ENCODE measurements at regions of chr7 and their contacts with region 1.

Region 1: DNA sequence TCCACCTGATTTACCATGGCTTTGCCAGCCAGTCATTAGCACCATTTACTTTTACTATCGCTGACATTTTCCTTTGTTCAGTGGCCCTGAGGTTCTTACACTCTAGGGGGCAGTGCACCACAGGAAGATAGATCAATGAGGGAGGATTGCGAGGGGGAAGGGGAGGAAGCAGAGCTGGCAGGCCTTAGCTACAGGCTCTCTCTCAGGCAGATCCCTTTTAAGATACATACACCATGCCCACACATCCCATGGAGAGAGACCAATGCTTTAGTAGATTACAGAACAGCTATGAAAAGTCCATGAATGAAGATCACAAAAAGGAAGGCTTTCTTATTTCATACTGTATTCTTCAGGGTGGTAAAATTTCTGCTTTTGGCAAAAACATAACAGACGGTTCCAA is 47.4 kb downstream of the DENND11 start:
- DNase-seq: peak; percentile 14 to 80 (median 62)
- ATAC-seq: peak; percentile 86 to 96 (median 93)
- H3K4me3 ChIP-seq: no peak overlapping the region
- H3K4me3 Mint-ChIP-seq: no peak overlapping the region
- H3K27ac ChIP-seq: no peak overlapping the region
- H3K27ac Mint-ChIP-seq: peak overlapping the region; percentile 30 to 82
- H3K4me1 ChIP-seq: no peaks in the 10 kb centered on the region
- H3K4me1 Mint-ChIP-seq: peaks cover 6 to 10% (median 6%) of the 10 kb centered on the region in 3 donors
- H3K27me3 ChIP-seq: no peaks in the 10 kb centered on the region
- H3K27me3 Mint-ChIP-seq: no peaks in the 10 kb centered on the region

Region 2: GRCh38 chr7:141128506-141128905 is 526.0 kb before region 1 on chr7:
- CTCF ChIA-PET with region 1: no interaction called
- POLR2A ChIA-PET with region 1: no interaction called
- DNase-seq: no peak
- ATAC-seq: no peak
- H3K4me3 ChIP-seq: no peak overlapping the region
- H3K4me3 Mint-ChIP-seq: no peak overlapping the region
- H3K27ac ChIP-seq: no peak overlapping the region
- H3K27ac Mint-ChIP-seq: no peak overlapping the region
- H3K4me1 ChIP-seq: no peaks in the 10 kb centered on the region
- H3K4me1 Mint-ChIP-seq: no peaks in the 10 kb centered on the region
- H3K27me3 ChIP-seq: peaks cover 0 to 9% of the 10 kb centered on the region in 2 experiments
- H3K27me3 Mint-ChIP-seq: peaks cover 18 to 24% of the 10 kb centered on the region in 2 donors

Region 3: DNA sequence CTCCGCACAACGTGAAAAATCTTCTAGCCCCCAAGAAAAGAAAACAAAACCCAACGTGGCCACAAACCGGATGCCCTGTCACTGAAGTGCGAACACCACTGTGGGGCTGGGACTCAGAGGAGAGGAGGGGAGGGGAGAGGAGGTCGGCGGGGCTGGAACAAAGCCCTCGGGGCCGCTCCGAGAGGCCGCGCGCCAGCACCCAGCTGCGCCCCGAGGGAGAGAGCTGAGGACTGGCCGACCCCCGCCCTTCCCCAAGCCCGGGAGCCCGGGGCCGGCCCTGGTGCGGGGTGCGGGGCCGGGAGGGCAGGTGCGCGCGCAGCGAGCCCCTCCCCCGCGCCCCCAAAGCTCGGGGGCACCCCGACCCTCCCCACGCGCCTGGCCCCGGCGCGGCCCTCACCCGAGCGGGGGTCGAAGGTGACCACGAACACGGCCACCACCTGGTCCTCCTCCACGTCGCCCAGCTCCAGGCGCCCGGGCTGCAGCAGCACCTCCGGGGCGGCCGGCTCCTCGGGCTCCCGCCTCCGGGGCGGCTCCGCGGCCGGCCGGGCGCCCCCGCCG is 47.0 kb after region 1 on chr7:
- CTCF ChIA-PET with region 1: interaction called in 1 of 2 experiments, 11 read pairs
- POLR2A ChIA-PET with region 1: interaction called in 1 of 2 experiments, 3 read pairs
- DNase-seq: peak; percentile 45 to 86 (median 77)
- ATAC-seq: peak; percentile 87 to 90 (median 88)
- H3K4me3 ChIP-seq: peak overlapping the region; percentile 51 to 58
- H3K4me3 Mint-ChIP-seq: peak overlapping the region; percentile 84 to 94 (median 88)
- H3K27ac ChIP-seq: peak overlapping the region; percentile 28
- H3K27ac Mint-ChIP-seq: peak overlapping the region; percentile 56 to 86
- H3K4me1 ChIP-seq: peaks cover 4 to 20% of the 10 kb centered on the region in 2 experiments
- H3K4me1 Mint-ChIP-seq: peaks cover 47 to 56% (median 50%) of the 10 kb centered on the region in 3 donors
- H3K27me3 ChIP-seq: no peaks in the 10 kb centered on the region
- H3K27me3 Mint-ChIP-seq: no peaks in the 10 kb centered on the region

Region 4: DNA sequence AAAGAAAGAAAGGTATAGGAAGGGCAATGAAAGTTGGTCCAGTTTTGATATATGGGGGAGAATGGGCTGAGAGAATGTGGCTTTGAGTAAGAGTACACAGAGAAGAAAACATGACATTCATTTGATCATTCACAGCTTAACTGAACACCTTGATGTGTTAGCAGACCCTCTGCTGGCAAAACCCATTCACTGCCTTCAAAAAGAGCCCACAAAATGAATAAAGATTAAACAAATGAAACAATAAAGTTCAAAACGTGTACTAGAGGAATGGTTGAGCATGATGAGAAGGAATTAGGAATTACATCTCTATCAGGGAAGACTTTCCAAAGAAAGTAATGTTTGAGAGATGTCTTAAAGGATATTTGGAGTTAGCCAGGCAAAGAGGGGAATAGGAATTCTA is 55.8 kb after region 1 on chr7:
- CTCF ChIA-PET with region 1: interaction called, 7 to 11 read pairs
- POLR2A ChIA-PET with region 1: interaction called in 1 of 2 experiments, 3 read pairs
- DNase-seq: peak in 1 of 35 experiments; percentile 21
- ATAC-seq: no peak
- H3K4me3 ChIP-seq: no peak overlapping the region
- H3K4me3 Mint-ChIP-seq: no peak overlapping the region
- H3K27ac ChIP-seq: no peak overlapping the region
- H3K27ac Mint-ChIP-seq: no peak overlapping the region
- H3K4me1 ChIP-seq: no peaks in the 10 kb centered on the region
- H3K4me1 Mint-ChIP-seq: peaks cover 0 to 2% (median 0%) of the 10 kb centered on the region in 3 donors
- H3K27me3 ChIP-seq: no peaks in the 10 kb centered on the region
- H3K27me3 Mint-ChIP-seq: no peaks in the 10 kb centered on the region

Region 5: GRCh38 chr7:141737834-141738591 is 83.5 kb after region 1 on chr7 and contains the start of gene SSBP1:
- CTCF ChIA-PET with region 1: interaction called, 12 to 39 read pairs
- POLR2A ChIA-PET with region 1: interaction called in 1 of 2 experiments, 8 read pairs
- DNase-seq: peak; percentile 82 to 97 (median 89)
- ATAC-seq: peak; percentile 85 to 93 (median 90)
- H3K4me3 ChIP-seq: peak within 1 kb of the TSS; percentile 65 to 96
- H3K4me3 Mint-ChIP-seq: peak within 1 kb of the TSS; percentile 96 to 98 (median 97)
- H3K27ac ChIP-seq: peak within 1 kb of the TSS; percentile 87
- H3K27ac Mint-ChIP-seq: peak within 1 kb of the TSS; percentile 95 to 97
- H3K4me1 ChIP-seq: peaks cover 14 to 18% of the 10 kb centered on the region in 2 experiments
- H3K4me1 Mint-ChIP-seq: peaks cover 52 to 54% (median 53%) of the 10 kb centered on the region in 3 donors
- H3K27me3 ChIP-seq: no peaks in the 10 kb centered on the region
- H3K27me3 Mint-ChIP-seq: no peaks in the 10 kb centered on the region
- total RNA-seq, gene SSBP1: 88.1 to 116 (median 91.1) TPM

Region 6: GRCh38 chr7:141785706-141786552 is 131.4 kb after region 1 on chr7:
- CTCF ChIA-PET with region 1: interaction called, 29 to 32 read pairs
- POLR2A ChIA-PET with region 1: interaction called in 1 of 2 experiments, 3 read pairs
- DNase-seq: peak in 20 of 35 experiments; percentile 0 to 62 (median 4)
- ATAC-seq: peak in 1 of 4 experiments; percentile 60
- H3K4me3 ChIP-seq: no peak overlapping the region
- H3K4me3 Mint-ChIP-seq: no peak overlapping the region
- H3K27ac ChIP-seq: no peak overlapping the region
- H3K27ac Mint-ChIP-seq: no peak overlapping the region
- H3K4me1 ChIP-seq: no peaks in the 10 kb centered on the region
- H3K4me1 Mint-ChIP-seq: no peaks in the 10 kb centered on the region
- H3K27me3 ChIP-seq: no peaks in the 10 kb centered on the region
- H3K27me3 Mint-ChIP-seq: no peaks in the 10 kb centered on the region

Region 7: DNA sequence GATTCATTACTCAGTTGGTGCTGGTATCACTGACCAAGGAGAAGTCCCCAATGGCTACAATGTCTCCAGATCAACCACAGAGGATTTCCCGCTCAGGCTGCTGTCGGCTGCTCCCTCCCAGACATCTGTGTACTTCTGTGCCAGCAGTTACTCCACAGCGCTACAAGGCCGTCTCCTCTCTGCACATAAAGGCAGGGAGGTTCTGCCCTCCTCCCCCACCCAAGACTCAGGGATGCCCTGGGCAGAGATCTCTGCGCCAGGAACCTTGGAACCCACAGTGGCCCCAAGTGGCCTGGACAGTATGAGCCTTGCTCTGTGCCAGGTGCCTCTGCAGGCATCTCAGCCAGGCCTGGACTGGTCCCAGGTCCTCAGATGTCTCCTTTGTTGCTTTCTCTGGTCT is 796.7 kb after region 1 on chr7:
- CTCF ChIA-PET with region 1: no interaction called
- POLR2A ChIA-PET with region 1: no interaction called
- DNase-seq: no peak
- ATAC-seq: no peak
- H3K4me3 ChIP-seq: peak overlapping the region in 1 of 2 donors; percentile 7
- H3K4me3 Mint-ChIP-seq: peak overlapping the region; percentile 13 to 39 (median 36)
- H3K27ac ChIP-seq: no peak overlapping the region
- H3K27ac Mint-ChIP-seq: no peak overlapping the region
- H3K4me1 ChIP-seq: peaks cover 11 to 16% of the 10 kb centered on the region in 2 experiments
- H3K4me1 Mint-ChIP-seq: peaks cover 19 to 34% (median 30%) of the 10 kb centered on the region in 3 donors
- H3K27me3 ChIP-seq: peaks cover 0 to 5% of the 10 kb centered on the region in 2 experiments
- H3K27me3 Mint-ChIP-seq: no peaks in the 10 kb centered on the region

Region 8: GRCh38 chr7:142494021-142494420 is 839.5 kb after region 1 on chr7:
- CTCF ChIA-PET with region 1: interaction called in 1 of 2 experiments, 14 read pairs
- POLR2A ChIA-PET with region 1: no interaction called
- DNase-seq: no peak
- ATAC-seq: no peak
- H3K4me3 ChIP-seq: no peak overlapping the region
- H3K4me3 Mint-ChIP-seq: no peak overlapping the region
- H3K27ac ChIP-seq: no peak overlapping the region
- H3K27ac Mint-ChIP-seq: peak overlapping the region in 1 of 2 donors; percentile 22
- H3K4me1 ChIP-seq: peaks cover 4 to 8% of the 10 kb centered on the region in 2 experiments
- H3K4me1 Mint-ChIP-seq: peaks cover 13 to 38% (median 35%) of the 10 kb centered on the region in 3 donors
- H3K27me3 ChIP-seq: no peaks in the 10 kb centered on the region
- H3K27me3 Mint-ChIP-seq: no peaks in the 10 kb centered on the region

Measured in T-cell (primary cell).